ENCODE measurements at regions of chr7 and their contacts with region 1.

Region 1: GRCh38 chr7:151876899-151877777 is at the start of gene PRKAG2:
- DNase-seq: peak; percentile 38 to 89 (median 75)

Region 2: DNA sequence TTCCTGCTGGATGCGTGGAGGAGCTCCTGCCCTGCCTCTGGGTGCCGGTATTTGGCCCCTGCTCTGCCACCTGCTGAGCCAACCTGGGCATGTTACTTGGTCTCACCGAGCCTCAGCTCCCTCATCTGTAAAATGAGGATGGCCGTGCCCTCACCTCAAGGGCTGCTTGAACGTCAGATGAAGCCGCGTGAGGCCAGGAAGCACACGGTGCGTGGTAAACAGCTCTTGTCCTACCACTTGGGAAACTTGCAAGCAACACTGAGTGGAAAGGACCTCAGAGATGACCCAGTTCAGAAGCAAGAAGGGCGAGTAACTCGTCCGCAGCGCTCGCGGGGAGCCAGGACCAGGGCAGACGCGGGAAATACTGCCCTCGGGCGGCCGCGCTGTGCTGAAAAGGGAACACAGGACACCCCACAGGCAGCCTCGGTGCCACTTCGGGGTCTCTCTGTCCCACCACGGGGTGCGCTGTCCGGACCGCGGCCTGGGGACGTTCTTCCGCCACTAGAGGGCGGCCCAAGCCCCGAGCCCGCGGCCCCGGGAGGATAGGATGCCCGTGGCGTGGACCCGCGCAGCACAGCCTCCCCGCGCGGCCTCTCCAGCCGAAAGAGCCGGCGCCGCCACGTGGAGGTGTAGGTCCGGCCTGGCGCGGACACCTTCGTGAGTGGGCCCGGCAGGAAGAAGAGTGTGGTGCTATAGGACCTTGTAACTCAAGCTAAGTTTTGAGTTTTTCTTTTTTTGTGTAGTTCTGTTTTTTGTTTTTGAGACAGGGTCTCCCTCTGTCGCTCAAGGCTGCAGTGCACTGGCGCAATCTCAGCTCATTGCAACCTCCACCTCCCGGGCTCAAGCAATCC is 94.3 kb before region 1 on chr7:
- intact Hi-C with region 1: loop called (anchors 10 kb)
- DNase-seq: peak; percentile 45 to 86 (median 72)

Region 3: GRCh38 chr7:151890355-151891004 is 13.3 kb after region 1 on chr7:
- intact Hi-C with region 1: no loop called
- DNase-seq: peak in 29 of 42 donors; percentile 20 to 76 (median 54)

Region 4: DNA sequence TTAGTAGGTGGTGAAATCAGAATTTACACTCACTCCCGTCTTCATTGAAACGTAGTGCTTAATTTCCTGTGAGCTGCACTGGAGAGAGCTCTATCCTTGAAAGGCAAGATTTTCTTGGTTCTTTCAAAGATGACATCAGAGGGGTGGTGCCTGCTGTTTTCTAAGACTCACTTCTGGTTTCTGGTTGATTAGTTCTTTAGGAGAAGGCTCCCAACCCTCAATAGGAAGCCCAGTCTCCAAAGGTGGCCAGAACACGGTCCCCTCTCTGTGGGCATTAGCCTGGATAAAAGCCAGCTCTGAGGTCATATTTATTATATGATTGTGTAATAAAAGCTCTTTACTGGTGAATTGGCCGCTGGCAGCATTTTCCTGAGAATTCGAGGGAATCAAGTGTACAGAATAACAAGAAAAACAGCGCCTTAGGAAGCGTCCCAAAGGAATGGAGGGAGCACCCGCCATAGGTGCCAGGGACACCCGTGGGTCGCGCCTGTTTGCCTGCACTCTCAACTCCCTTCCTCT is 55.3 kb after region 1 on chr7:
- intact Hi-C with region 1: loop called (anchors 5 kb)
- DNase-seq: peak in 16 of 42 donors; percentile 8 to 59 (median 30)

Measured in head of caudate nucleus (tissue), 42 donors.